OCI-LY7 (cell line): ENCODE measurements at regions of chr13 and their contacts with region 1.

Region 1: DNA sequence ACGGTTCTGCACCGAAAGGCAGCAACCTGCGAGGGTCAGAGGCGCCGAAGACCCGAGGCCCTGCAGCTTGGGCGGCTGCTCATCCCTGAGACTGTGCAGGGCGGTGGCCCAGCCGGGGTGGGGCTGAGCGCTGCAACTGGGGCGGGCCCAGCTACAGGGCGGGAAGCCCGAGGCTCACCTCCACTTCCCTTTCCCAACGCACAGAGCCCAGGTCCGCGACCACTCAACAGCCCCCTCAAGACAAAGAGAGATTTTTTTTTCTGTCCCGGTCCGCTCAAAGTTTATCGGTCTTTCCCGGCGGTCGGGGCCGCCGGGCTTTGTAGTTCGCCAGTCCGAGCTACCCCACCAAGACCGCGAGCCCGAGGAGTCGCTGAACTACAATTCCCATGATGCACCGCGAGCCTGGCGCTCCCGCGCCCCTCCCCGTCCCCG is 573 bp downstream of the KATNAL1 start:
- DNase-seq: peak; percentile 98
- H3K4me3 ChIP-seq: peak overlapping the region; percentile 82
- H3K27ac ChIP-seq: peak overlapping the region; percentile 70
- H3K4me1 ChIP-seq: peaks cover 72% of the 10 kb centered on the region
- CTCF ChIP-seq: no peak

Region 2: GRCh38 chr13:30257468-30258099 is 49.2 kb before region 1 on chr13:
- CTCF ChIA-PET with region 1: no interaction called
- POLR2A ChIA-PET with region 1: interaction called, 4 read pairs
- intact Hi-C with region 1: loop called (anchors 2 kb)
- DNase-seq: peak; percentile 54
- H3K4me3 ChIP-seq: peak overlapping the region; percentile 42
- H3K27ac ChIP-seq: peak overlapping the region; percentile 60
- H3K4me1 ChIP-seq: peaks cover 28% of the 10 kb centered on the region
- CTCF ChIP-seq: no peak

Region 3: GRCh38 chr13:30268673-30269072 is 38.1 kb before region 1 on chr13:
- CTCF ChIA-PET with region 1: no interaction called
- POLR2A ChIA-PET with region 1: no interaction called
- intact Hi-C with region 1: no loop called
- DNase-seq: no peak
- H3K4me3 ChIP-seq: no peak overlapping the region
- H3K27ac ChIP-seq: no peak overlapping the region
- H3K4me1 ChIP-seq: peaks cover 7% of the 10 kb centered on the region
- CTCF ChIP-seq: no peak

Region 4: DNA sequence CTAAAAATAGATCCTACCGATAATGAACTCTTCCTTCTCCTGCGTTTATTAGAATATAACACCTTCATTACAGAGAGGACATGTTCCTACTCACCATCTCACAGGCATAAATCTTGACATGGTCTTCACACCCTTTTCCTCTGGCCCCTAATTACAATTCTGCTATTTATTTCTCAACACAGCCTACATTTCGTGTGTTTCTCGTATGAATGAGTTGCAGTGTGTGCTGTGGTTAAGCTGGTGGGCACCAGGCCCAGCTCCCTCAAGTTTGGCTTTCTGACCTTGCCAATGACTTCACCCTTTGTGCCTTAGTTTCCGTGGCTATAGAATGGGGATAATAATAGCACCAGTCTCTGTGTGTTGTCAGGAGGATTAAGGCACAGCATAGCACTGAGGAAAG is 12.9 kb after region 1 on chr13:
- CTCF ChIA-PET with region 1: interaction called, 4 read pairs
- POLR2A ChIA-PET with region 1: interaction called, 54 read pairs
- intact Hi-C with region 1: no loop called
- DNase-seq: no peak
- H3K4me3 ChIP-seq: no peak overlapping the region
- H3K27ac ChIP-seq: no peak overlapping the region
- H3K4me1 ChIP-seq: peaks cover 50% of the 10 kb centered on the region
- CTCF ChIP-seq: no peak

Region 5: GRCh38 chr13:30422054-30422839 is 115.5 kb after region 1 on chr13 and contains the start of gene UBE2L5:
- CTCF ChIA-PET with region 1: no interaction called
- POLR2A ChIA-PET with region 1: interaction called, 6 read pairs
- intact Hi-C with region 1: loop called (anchors 5 kb)
- DNase-seq: peak; percentile 88
- H3K4me3 ChIP-seq: peak within 1 kb of the TSS; percentile 72
- H3K27ac ChIP-seq: peak within 1 kb of the TSS; percentile 76
- H3K4me1 ChIP-seq: peaks cover 77% of the 10 kb centered on the region
- CTCF ChIP-seq: no peak
- total RNA-seq, gene UBE2L5: 0.15 and 0.22 TPM in 2 replicates

Region 6: DNA sequence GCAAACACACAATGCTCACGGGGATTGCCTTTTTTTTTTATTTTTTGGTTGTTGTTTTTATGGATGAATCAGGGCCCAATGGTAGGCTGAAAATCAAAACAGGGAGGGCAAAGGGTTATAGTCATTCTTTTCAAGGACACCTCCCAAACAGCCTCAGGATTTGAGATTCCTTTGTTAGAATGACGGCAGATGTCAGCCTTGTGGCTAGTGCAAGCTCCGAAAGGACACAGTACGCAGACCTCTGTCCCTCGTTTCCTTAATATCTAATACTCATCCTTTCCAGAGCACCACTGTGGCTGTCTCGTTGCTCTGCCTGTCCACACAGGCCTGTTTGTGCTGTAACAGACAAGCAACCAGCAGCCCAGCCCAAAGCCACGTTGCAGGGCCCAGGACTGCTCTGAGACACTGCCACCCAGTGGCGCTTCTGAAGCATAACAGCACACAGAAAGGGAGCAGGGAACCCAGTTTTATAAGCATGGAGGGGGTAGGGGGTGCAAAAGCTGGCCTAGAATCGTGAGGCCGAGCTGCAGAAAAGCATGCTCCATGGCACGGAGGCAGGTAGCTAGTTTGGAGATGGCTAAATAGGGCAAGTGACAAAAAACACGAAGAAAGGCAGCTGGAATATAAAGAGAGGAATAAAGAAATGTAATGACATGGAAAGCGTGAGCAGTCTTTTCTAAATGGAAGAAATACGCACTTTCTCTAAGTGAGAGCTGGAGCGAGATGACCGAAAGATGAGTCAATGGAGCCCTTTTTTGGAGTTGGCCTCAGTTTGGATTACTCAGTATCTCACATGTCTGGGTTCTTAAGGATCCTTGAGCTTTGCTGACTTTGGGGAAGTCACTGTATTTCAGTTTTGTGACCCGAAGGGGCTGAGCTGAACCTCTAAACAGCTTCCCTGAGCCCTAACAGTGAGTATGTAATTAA is 558.6 kb after region 1 on chr13:
- CTCF ChIA-PET with region 1: no interaction called
- POLR2A ChIA-PET with region 1: no interaction called
- intact Hi-C with region 1: no loop called
- DNase-seq: peak; percentile 78
- H3K4me3 ChIP-seq: no peak overlapping the region
- H3K27ac ChIP-seq: no peak overlapping the region
- H3K4me1 ChIP-seq: no peaks in the 10 kb centered on the region
- CTCF ChIP-seq: peak; percentile 96